Activated CD4-positive, alpha-beta memory T cell treated with anti-CD3 and anti-CD28 coated beads for 36 hours (primary cell): ENCODE measurements at regions of chr5 and their contacts with region 1.

Region 1: DNA sequence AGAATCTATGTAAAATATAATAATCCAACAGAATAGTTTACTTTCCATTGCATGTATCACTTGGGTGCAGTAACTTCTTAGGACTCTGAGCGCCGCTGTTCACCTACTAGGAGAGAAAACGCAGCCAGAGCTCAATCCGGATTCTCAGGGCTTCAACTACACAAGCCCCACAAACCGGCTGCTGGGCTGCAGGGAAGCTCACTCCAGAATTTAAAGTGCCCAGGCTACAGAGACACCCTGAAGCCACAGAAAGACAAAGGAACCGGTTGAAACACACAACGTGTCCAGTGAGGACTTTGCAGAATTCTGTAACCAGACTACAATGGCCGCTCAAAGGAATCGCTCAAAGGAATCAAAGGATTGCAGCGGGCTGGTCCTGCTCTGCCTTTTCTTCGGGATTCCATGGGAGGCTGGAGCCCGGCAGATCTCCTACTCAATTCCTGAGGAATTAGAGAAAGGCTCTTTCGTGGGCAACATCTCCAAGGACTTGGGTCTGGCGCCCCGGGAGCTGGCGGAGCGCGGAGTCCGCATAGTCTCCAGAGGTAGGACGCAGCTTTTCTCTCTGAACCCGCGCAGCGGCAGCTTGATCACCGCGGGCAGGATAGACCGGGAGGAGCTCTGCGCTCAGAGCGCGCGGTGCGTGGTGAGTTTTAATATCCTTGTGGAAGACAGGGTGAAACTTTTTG is at the start of gene PCDHGA10:
- DNase-seq: peak; percentile 69
- H3K4me3 Mint-ChIP-seq: peak within 1 kb of the TSS; percentile 66
- H3K27ac Mint-ChIP-seq: no peak within 1 kb of the TSS
- H3K4me1 Mint-ChIP-seq: peaks cover 18% of the 10 kb centered on the region
- H3K27me3 Mint-ChIP-seq: peaks cover 61% of the 10 kb centered on the region
- total RNA-seq, gene PCDHGA10: 0.07 to 0.10 TPM

Region 2: DNA sequence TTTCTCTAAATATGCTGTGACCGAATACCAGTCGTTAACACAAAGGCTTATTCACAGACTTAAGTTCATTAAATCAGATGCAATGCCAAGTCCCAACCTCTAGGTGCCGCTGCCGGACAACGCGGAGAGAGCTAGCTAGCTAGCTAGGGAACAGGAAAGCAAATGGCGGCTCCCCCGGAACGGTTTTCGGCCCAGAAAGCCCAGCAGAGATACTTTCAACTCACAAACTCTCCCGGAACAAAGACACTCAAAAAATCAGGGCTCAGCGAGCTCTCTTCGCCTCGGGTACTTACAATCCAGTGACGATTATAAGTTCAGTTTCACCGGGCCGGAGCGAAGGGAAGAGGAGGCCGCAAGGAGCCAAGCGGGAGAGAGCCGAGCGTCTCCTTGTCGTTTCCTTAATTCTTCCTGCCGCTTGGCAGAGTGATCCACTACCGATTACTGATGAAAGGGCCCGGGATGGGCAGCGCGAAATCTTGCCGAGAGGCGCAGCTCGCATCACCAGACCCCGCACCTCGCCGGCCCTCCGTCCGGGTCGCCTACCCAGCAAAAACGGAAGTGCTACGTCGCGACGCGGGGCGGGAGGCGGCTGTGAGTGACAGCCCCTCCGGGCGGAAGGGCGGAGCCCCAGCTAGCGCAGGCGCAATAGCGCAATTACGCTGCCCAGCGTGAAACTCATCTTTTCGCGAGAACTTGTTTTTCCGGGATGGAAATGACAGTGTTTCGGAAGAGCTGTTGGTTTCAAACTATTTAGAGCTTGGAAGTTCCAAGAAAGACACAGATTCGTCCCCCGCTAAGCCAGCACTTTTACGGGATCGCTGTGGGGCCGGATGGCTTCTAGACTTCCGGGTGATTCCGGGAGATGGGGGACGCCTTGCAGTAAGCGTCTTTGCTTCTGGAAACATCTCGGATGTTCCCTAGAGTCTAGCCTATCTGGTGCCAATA is 92.5 kb before region 1 on chr5 and contains the start of gene TAF7:
- CTCF ChIA-PET with region 1: interaction called, 10 read pairs
- POLR2A ChIA-PET with region 1: no interaction called
- intact Hi-C with region 1: no loop called
- DNase-seq: peak; percentile 95
- H3K4me3 Mint-ChIP-seq: peak within 1 kb of the TSS; percentile 98
- H3K27ac Mint-ChIP-seq: peak within 1 kb of the TSS; percentile 99
- H3K4me1 Mint-ChIP-seq: peaks cover 23% of the 10 kb centered on the region
- H3K27me3 Mint-ChIP-seq: no peaks in the 10 kb centered on the region
- total RNA-seq, gene TAF7: 54.6 to 55.5 TPM

Region 3: GRCh38 chr5:141359790-141360426 is 53.1 kb before region 1 on chr5 and contains the start of gene PCDHGB2:
- CTCF ChIA-PET with region 1: interaction called, 3 read pairs
- POLR2A ChIA-PET with region 1: no interaction called
- intact Hi-C with region 1: loop called (anchors 10 kb)
- DNase-seq: no peak
- H3K4me3 Mint-ChIP-seq: peak within 1 kb of the TSS; percentile 70
- H3K27ac Mint-ChIP-seq: no peak within 1 kb of the TSS
- H3K4me1 Mint-ChIP-seq: peaks cover 2% of the 10 kb centered on the region
- H3K27me3 Mint-ChIP-seq: peaks cover 65% of the 10 kb centered on the region
- total RNA-seq, gene PCDHGB2: 0.10 to 0.19 TPM

Region 4: GRCh38 chr5:141430332-141431113 is 17.5 kb after region 1 on chr5 and contains the start of gene PCDHGA12:
- CTCF ChIA-PET with region 1: interaction called, 32 read pairs
- POLR2A ChIA-PET with region 1: no interaction called
- intact Hi-C with region 1: no loop called
- DNase-seq: peak; percentile 43
- H3K4me3 Mint-ChIP-seq: peak within 1 kb of the TSS; percentile 49
- H3K27ac Mint-ChIP-seq: peak within 1 kb of the TSS; percentile 63
- H3K4me1 Mint-ChIP-seq: peaks cover 4% of the 10 kb centered on the region
- H3K27me3 Mint-ChIP-seq: peaks cover 56% of the 10 kb centered on the region
- total RNA-seq, gene PCDHGA12: 0.07 TPM in 1 of 2 experiments, not detected in the other

Region 5: GRCh38 chr5:141557681-141558136 is 144.7 kb after region 1 on chr5:
- CTCF ChIA-PET with region 1: interaction called, 33 read pairs
- POLR2A ChIA-PET with region 1: no interaction called
- intact Hi-C with region 1: loop called (anchors 2 kb)
- DNase-seq: peak; percentile 84
- H3K4me3 Mint-ChIP-seq: no peak overlapping the region
- H3K27ac Mint-ChIP-seq: peak overlapping the region; percentile 47
- H3K4me1 Mint-ChIP-seq: peaks cover 25% of the 10 kb centered on the region
- H3K27me3 Mint-ChIP-seq: no peaks in the 10 kb centered on the region